Dorsolateral prefrontal cortex (tissue), 120 donors: ENCODE measurements at regions of chr3 and their contacts with region 1.

Region 1: DNA sequence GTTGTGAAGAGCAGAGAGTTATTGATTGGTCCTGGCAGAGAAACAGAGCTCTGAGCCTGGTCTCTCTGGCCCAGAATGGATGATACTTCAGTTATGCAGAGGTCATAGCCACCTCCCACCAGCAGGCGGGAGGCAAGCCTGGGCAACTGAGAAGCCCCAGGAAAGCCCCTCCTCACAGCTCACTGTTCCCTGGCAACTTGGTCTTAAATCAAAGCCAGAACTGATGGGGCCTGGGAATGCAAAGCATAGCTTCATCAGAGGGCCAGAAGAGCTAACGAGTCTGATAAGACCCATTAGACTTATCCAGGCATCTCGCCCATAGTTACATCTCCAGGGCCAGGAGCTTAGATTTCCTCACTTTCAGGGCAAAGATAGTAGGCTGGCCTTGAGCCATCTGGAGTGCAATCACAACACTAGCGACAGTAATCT is 5.5 kb upstream of the COLQ start:
- DNase-seq: no peak
- H3K4me3 ChIP-seq: no peak overlapping the region
- H3K27ac ChIP-seq: no peak overlapping the region
- H3K27me3 ChIP-seq: no peaks in the 10 kb centered on the region
- CTCF ChIP-seq: no peak

Region 2: GRCh38 chr3:15458212-15458780 is 68.7 kb before region 1 on chr3:
- intact Hi-C with region 1: loop called in 1 of 2 experiments (anchors 10 kb)
- DNase-seq: no peak
- H3K4me3 ChIP-seq: no peak overlapping the region
- H3K27ac ChIP-seq: no peak overlapping the region
- H3K27me3 ChIP-seq: no peaks in the 10 kb centered on the region
- CTCF ChIP-seq: no peak